ENCODE measurements at regions of chr19 and their contacts with region 1.

Region 1: GRCh38 chr19:38647368-38647965 is at the start of gene ACTN4:
- DNase-seq: peak; percentile 100
- ATAC-seq: peak; percentile 84 to 88 (median 85)
- H3K4me3 ChIP-seq: peak within 1 kb of the TSS; percentile 86
- H3K27ac ChIP-seq: peak within 1 kb of the TSS; percentile 95
- H3K4me1 ChIP-seq: peaks cover 32% of the 10 kb centered on the region
- H3K27me3 ChIP-seq: no peaks in the 10 kb centered on the region
- CTCF ChIP-seq: no peak
- total RNA-seq, gene ACTN4: 79.9 to 127 (median 89.2) TPM

Region 2: DNA sequence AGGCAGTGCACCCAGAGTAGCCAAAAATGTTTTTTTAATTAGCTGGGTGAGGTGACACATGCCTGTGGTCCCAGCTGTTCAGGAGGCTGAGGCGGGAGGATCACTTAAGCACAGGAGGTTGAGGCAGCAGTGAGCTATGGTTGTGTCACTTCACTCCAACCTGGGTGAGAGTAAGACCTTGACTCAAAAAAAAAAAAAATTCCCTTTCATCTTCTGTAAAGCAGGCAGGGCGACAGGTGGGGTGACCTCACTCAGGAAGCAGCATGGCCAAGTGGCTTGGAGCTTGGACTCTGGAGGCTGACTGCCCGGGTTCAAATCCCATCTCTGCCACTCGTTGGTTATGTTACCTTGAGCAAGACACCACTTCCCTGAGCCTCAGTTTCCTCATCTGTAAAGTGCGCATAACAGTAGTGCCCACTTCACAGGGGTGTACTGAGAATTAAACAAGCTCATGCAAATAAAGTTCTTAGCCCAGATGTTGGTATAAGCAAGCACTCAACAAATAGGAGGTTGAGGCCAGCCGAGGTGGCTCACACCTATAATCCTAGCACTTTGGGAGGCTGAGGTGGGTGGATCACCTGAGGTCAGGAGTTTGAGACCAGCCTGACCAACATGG is 78.0 kb before region 1 on chr19:
- intact Hi-C with region 1: no loop called
- DNase-seq: no peak
- ATAC-seq: no peak
- H3K4me3 ChIP-seq: no peak overlapping the region
- H3K27ac ChIP-seq: no peak overlapping the region
- H3K4me1 ChIP-seq: no peaks in the 10 kb centered on the region
- H3K27me3 ChIP-seq: no peaks in the 10 kb centered on the region
- CTCF ChIP-seq: no peak

Region 3: GRCh38 chr19:38693380-38694223 is 46.1 kb after region 1 on chr19:
- intact Hi-C with region 1: loop called (anchors 5 kb)
- DNase-seq: no peak
- ATAC-seq: peak; percentile 8 to 15 (median 13)
- H3K4me3 ChIP-seq: peak overlapping the region; percentile 8
- H3K27ac ChIP-seq: peak overlapping the region; percentile 98
- H3K4me1 ChIP-seq: peaks cover 76% of the 10 kb centered on the region
- H3K27me3 ChIP-seq: no peaks in the 10 kb centered on the region
- CTCF ChIP-seq: no peak

Region 4: GRCh38 chr19:38718747-38719543 is 71.5 kb after region 1 on chr19:
- intact Hi-C with region 1: loop called in 1 of 2 experiments (anchors 5 kb)
- DNase-seq: peak; percentile 55 to 82
- ATAC-seq: peak; percentile 32 to 51 (median 36)
- H3K4me3 ChIP-seq: no peak overlapping the region
- H3K27ac ChIP-seq: peak overlapping the region; percentile 73
- H3K4me1 ChIP-seq: peaks cover 43% of the 10 kb centered on the region
- H3K27me3 ChIP-seq: no peaks in the 10 kb centered on the region
- CTCF ChIP-seq: peak; percentile 24

Region 5: DNA sequence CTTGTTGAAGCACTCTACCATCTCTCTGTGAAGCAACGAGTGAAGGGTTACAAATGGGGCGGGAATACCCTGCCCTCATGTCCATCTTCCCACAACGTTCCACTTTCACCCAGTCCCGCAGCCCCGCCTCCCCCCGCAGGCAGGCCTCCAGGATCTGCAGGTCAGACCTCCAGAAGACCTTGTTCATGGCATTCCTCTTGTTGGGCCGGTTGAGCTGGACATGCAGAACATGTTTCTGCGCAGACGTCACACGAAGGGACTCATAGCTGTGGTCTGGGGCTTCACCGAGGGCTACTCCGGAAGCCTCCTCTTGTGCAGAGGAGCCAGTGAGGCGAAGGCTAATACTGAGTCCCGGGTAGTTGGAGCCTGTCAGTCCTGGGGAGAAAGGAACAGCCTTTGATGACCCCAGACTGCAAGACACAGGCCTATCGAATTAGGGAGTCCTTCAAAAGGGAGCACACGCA is 183.7 kb after region 1 on chr19:
- intact Hi-C with region 1: loop called (anchors 5 to 10 kb)
- DNase-seq: peak; percentile 81 to 87
- ATAC-seq: peak; percentile 48 to 62 (median 60)
- H3K4me3 ChIP-seq: peak overlapping the region; percentile 85
- H3K27ac ChIP-seq: peak overlapping the region; percentile 99
- H3K4me1 ChIP-seq: peaks cover 48% of the 10 kb centered on the region
- H3K27me3 ChIP-seq: no peaks in the 10 kb centered on the region
- CTCF ChIP-seq: no peak

Region 6: GRCh38 chr19:38899447-38900219 is 252.2 kb after region 1 on chr19 and contains the starts of genes NFKBIB and SIRT2:
- intact Hi-C with region 1: loop called in 1 of 2 experiments (anchors 1 kb)
- DNase-seq: peak; percentile 100
- ATAC-seq: peak; percentile 95 to 96 (median 96)
- H3K4me3 ChIP-seq: peak within 1 kb of the TSS; percentile 87
- H3K27ac ChIP-seq: peak within 1 kb of the TSS; percentile 96
- H3K4me1 ChIP-seq: peaks cover 45% of the 10 kb centered on the region
- H3K27me3 ChIP-seq: no peaks in the 10 kb centered on the region
- CTCF ChIP-seq: no peak
- total RNA-seq, gene NFKBIB: 21.9 to 41.0 (median 26.6) TPM
- total RNA-seq, gene SIRT2: 133 to 180 (median 147) TPM

Region 7: DNA sequence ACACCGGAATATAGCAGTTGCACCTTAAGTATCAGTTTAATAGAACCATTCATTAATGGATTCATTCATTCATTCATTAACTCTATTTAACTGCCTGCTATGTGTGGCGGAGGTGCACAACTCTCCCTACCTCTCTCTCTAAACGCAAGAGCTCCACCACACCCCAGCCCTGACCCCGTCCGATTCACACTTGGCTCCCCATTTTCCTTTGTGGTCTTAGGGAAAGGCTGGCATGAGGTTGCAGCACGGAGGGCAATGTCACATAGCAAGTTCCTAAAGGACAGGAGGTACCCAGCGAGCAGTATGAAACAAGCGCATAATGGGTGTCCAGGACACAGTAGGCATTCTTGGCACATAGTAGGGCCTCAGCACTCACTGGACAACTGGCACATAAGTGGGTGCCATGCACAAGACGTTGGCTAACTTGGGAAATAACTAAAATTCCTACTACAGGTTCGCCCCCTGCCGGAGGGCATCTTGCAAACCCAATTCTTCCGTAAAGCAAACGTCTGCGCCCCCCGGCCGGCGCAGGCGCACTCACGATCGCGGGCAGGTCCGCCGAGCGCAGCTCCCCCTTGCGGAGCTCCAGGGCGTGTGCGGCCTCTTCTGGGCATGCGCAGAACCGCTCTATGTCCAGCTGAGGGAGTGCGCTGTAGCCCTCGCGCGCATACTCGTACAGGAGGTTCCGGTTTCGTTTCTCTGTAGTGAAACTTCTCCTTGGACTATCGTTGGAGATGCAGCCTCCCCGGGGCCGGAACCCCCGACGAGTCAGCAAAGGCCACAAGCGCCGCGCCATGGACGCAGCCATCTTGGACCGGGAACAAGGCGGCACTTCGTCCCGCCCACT is 282.7 kb after region 1 on chr19 and contains the start of gene SARS2:
- intact Hi-C with region 1: loop called in 1 of 2 experiments (anchors 10 kb)
- DNase-seq: peak; percentile 92 to 96
- ATAC-seq: peak; percentile 89 to 94 (median 92)
- H3K4me3 ChIP-seq: peak within 1 kb of the TSS; percentile 78
- H3K27ac ChIP-seq: peak within 1 kb of the TSS; percentile 93
- H3K4me1 ChIP-seq: peaks cover 18% of the 10 kb centered on the region
- H3K27me3 ChIP-seq: no peaks in the 10 kb centered on the region
- CTCF ChIP-seq: peak; percentile 98
- total RNA-seq, gene SARS2: 15.1 to 17.8 (median 16.8) TPM